ENCODE measurements at regions of chr17 and their contacts with region 1.

Region 1: GRCh38 chr17:81094509-81095382 is 59.8 kb downstream of the BAIAP2 start:
- DNase-seq: peak; percentile 90
- ATAC-seq: peak; percentile 45
- H3K4me3 ChIP-seq: peak overlapping the region in 1 of 3 experiments; percentile 15; a peak in 1 of 6 replicates
- H3K27ac ChIP-seq: peak overlapping the region; percentile 33
- H3K4me1 ChIP-seq: peaks cover 49% of the 10 kb centered on the region
- H3K27me3 ChIP-seq: no peaks in the 10 kb centered on the region
- CTCF ChIP-seq: no peak
- EP300 ChIP-seq: peak in 1 of 2 experiments; percentile 25; a peak in 1 of 4 replicates
- POLR2A ChIP-seq: peak in 1 of 2 experiments; percentile 45; a peak in 2 of 4 replicates
- RAD21 ChIP-seq: no peak

Region 2: DNA sequence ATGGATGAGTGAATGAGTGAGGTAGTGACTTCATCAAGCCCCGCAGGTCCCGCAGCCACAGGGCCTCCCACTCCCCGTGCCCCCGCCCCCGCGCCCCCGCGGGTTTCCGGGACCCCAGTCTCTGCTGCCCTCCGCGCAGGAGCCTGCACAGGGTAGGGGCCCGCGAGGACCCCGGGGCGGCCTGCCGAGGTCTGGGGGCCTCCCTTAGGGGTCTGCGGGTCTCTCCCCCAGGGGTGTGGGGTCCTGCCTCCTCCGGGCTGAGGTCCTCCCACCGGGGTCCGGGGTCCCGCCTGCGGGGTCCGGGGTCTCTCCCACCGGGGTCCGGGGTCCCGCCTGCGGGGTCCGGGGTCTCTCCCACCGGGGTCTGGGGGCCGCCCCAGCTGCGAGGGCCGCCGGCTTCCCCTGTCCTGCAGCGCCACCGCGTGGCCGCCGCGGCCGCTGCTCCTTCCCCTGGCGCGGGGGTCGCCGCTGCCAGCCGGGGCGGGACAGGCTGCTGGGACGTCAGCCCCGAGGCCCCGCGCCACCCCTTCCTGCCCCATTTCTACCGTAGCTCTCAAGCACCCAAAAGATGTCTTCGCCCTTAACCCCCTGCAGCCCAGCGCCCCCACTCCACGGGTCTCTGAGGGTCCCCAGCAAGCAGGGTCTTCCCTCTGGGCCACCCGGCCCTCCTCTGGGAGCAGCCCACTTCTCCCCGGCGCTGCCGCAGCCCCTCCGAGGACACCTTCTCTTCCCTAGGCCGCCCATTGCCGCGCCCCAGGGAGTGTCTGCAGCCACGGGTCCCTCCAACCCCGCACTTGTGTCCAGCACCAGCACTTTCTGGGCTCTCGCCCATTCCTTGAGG is 113.5 kb before region 1 on chr17:
- CTCF ChIA-PET with region 1: no interaction called
- POLR2A ChIA-PET with region 1: no interaction called
- in situ Hi-C with region 1: loop called (anchors 5 kb)
- intact Hi-C with region 1: no loop called
- DNase-seq: no peak
- ATAC-seq: peak; percentile 62
- H3K4me3 ChIP-seq: peak overlapping the region in 2 of 3 experiments; percentile 22 to 56; a peak in 2 of 6 replicates
- H3K27ac ChIP-seq: no peak overlapping the region
- H3K4me1 ChIP-seq: peaks cover 21% of the 10 kb centered on the region
- H3K27me3 ChIP-seq: peaks cover 8 to 46% of the 10 kb centered on the region in 2 experiments; a peak in 4 of 5 replicates
- CTCF ChIP-seq: peak; percentile 73
- EP300 ChIP-seq: no peak
- POLR2A ChIP-seq: no peak
- RAD21 ChIP-seq: peak; percentile 96

Region 3: DNA sequence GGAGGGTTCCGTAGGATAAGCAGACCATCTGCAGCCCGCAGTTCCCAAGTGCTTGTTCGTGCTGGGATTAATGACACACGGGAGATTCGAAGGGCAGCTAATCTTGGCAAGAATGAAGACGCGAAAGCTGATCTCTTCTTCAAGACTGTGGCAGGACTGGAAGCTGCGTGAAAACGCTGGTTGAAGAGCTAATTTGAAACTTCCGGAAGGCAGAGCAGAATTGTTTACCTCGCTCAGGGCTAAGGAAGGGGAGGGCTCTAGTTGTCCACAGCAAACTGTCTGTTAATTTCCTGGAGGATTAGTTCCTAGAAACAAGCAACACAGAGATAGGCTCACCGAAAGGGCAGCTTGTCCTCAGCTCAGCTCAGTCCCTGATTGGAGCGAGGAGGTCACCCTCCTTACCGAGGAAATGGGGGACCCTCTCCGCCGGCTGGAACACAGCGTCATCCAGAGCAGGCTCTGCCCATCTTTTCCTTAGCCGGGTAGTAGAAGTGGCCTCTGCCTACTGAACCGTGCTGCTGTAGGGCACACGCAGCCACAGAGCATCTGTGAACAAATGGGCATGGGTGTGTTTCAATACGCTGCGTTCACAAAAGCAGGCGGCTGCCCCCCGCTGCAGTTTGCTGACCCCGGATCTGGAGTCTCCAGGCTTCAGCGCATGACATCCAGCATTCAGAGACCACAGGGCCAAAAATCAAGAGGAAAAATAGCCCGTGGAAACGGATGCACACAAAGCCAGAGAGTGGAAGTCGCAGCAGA is 76.5 kb before region 1 on chr17:
- CTCF ChIA-PET with region 1: interaction called, 12 read pairs
- POLR2A ChIA-PET with region 1: no interaction called
- in situ Hi-C with region 1: no loop called
- intact Hi-C with region 1: loop called (anchors 1 kb)
- DNase-seq: no peak
- ATAC-seq: peak; percentile 61
- H3K4me3 ChIP-seq: peak overlapping the region; percentile 34 to 71 (median 47)
- H3K27ac ChIP-seq: no peak overlapping the region
- H3K4me1 ChIP-seq: peaks cover 56% of the 10 kb centered on the region
- H3K27me3 ChIP-seq: peaks cover 1 to 38% of the 10 kb centered on the region in 2 experiments; a peak in 3 of 5 replicates
- CTCF ChIP-seq: no peak
- EP300 ChIP-seq: no peak
- POLR2A ChIP-seq: no peak
- RAD21 ChIP-seq: no peak

Region 4: DNA sequence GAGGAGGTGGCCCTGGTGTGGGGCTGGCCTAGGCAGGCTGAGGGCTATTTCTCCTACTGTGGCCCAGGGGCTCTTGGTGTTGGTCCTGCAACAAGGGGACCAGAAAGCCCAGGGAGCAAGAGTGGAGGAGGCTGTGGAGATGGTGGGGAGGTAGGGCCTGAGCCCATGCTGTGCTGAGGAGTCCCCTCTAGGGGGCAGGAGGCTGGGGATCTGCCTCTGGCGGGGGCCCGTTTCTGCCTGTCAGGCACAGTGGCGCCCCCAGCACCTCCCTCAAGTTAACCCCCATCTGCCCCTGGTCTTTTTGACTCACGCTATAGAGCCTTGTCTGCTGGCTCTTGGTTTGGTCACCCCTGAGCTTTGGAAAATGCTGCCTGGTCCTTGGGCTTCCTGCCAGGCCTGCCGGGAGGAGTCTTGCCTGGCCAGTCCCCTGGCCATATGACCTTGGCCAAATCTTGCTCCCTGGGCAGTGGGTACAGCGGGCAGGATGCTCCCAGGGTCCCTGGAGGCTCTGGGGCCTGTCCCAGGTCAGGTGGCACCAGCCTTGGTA is 53.9 kb before region 1 on chr17:
- CTCF ChIA-PET with region 1: interaction called, 3 read pairs
- POLR2A ChIA-PET with region 1: interaction called, 7 read pairs
- in situ Hi-C with region 1: no loop called
- intact Hi-C with region 1: loop called (anchors 2 kb)
- DNase-seq: peak; percentile 37
- ATAC-seq: peak; percentile 13
- H3K4me3 ChIP-seq: no peak overlapping the region
- H3K27ac ChIP-seq: no peak overlapping the region
- H3K4me1 ChIP-seq: peaks cover 98% of the 10 kb centered on the region
- H3K27me3 ChIP-seq: no peaks in the 10 kb centered on the region; a peak in 1 of 5 replicates
- CTCF ChIP-seq: peak; percentile 72
- EP300 ChIP-seq: no peak
- POLR2A ChIP-seq: no peak
- RAD21 ChIP-seq: peak; percentile 72

Region 5: DNA sequence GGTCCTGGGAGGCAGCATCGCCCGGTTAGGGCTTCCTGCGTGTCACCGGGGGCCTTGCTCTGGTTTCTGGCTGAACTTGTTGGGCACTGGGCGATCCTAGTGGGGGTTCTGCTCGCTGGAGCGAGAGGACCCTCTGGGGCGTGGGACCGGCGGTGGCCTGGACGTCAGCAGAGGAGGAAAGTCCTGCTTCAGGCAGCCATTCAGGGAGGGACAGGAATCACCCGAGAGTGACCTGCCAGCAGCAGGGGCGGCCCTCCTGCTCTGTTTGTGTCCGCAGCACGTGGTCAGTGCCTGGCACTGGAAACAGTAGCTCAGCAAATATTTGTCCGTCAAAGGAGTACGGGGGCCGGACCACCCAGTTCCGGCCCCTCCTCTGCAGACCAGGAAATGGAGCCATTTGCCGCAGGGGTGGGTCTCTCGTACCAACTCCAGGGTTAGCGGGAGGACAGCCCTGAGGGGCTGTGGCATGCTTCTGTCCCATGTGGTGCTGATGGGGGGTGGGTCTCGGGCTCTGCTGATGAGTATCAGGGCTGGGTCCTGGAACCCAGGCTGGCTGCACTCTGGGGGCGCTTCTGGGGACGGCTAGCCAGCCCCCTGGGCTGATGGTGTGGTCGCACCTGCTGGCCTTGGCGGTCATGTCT is 11.5 kb before region 1 on chr17:
- CTCF ChIA-PET with region 1: no interaction called
- POLR2A ChIA-PET with region 1: interaction called, 20 read pairs
- in situ Hi-C with region 1: no loop called
- intact Hi-C with region 1: no loop called
- DNase-seq: peak; percentile 94
- ATAC-seq: peak; percentile 93
- H3K4me3 ChIP-seq: peak overlapping the region in 1 of 3 experiments; percentile 36; a peak in 1 of 6 replicates
- H3K27ac ChIP-seq: peak overlapping the region; percentile 86
- H3K4me1 ChIP-seq: peaks cover 34% of the 10 kb centered on the region
- H3K27me3 ChIP-seq: no peaks in the 10 kb centered on the region
- CTCF ChIP-seq: 0 out of 2 replicates have a peak, but pooled peaks have one; percentile 27
- EP300 ChIP-seq: peak in 1 of 2 experiments; percentile 92; a peak in 2 of 4 replicates
- POLR2A ChIP-seq: peak; percentile 23 to 64; a peak in 2 of 4 replicates
- RAD21 ChIP-seq: peak; percentile 43; the same call in 1 of the 2 replicates